ENCODE measurements at regions of chr5 and their contacts with region 1.

Region 1: GRCh38 chr5:43140286-43140685 is 19.6 kb downstream of the ZNF131 start:
- DNase-seq: peak in 1 of 35 experiments; percentile 43
- ATAC-seq: peak in 3 of 4 experiments; percentile 19 to 50 (median 49)
- H3K4me3 ChIP-seq: no peak overlapping the region
- H3K4me3 Mint-ChIP-seq: no peak overlapping the region
- H3K27ac ChIP-seq: no peak overlapping the region
- H3K27ac Mint-ChIP-seq: peak overlapping the region; percentile 19 to 65
- H3K4me1 ChIP-seq: peaks cover 8 to 9% of the 10 kb centered on the region in 2 experiments
- H3K4me1 Mint-ChIP-seq: peaks cover 49 to 63% (median 50%) of the 10 kb centered on the region in 3 donors
- H3K27me3 ChIP-seq: no peaks in the 10 kb centered on the region
- H3K27me3 Mint-ChIP-seq: no peaks in the 10 kb centered on the region

Region 2: GRCh38 chr5:43105369-43106289 is 34.7 kb before region 1 on chr5:
- CTCF ChIA-PET with region 1: interaction called, 4 to 10 read pairs
- POLR2A ChIA-PET with region 1: no interaction called
- DNase-seq: peak; percentile 75 to 97 (median 87)
- ATAC-seq: peak; percentile 92 to 97 (median 96)
- H3K4me3 ChIP-seq: peak overlapping the region; percentile 58 to 65
- H3K4me3 Mint-ChIP-seq: peak overlapping the region; percentile 76 to 82 (median 78)
- H3K27ac ChIP-seq: peak overlapping the region; percentile 62
- H3K27ac Mint-ChIP-seq: peak overlapping the region; percentile 75 to 84
- H3K4me1 ChIP-seq: peaks cover 12 to 32% of the 10 kb centered on the region in 2 experiments
- H3K4me1 Mint-ChIP-seq: peaks cover 35 to 44% (median 38%) of the 10 kb centered on the region in 3 donors
- H3K27me3 ChIP-seq: no peaks in the 10 kb centered on the region
- H3K27me3 Mint-ChIP-seq: no peaks in the 10 kb centered on the region

Region 3: GRCh38 chr5:43193181-43193893 is 53.1 kb after region 1 on chr5:
- CTCF ChIA-PET with region 1: no interaction called
- POLR2A ChIA-PET with region 1: interaction called in 1 of 2 experiments, 12 read pairs
- DNase-seq: peak in 8 of 35 experiments; percentile 4 to 63 (median 17)
- ATAC-seq: peak; percentile 50 to 84 (median 54)
- H3K4me3 ChIP-seq: peak overlapping the region; percentile 45 to 68
- H3K4me3 Mint-ChIP-seq: peak overlapping the region; percentile 79 to 87 (median 81)
- H3K27ac ChIP-seq: no peak overlapping the region
- H3K27ac Mint-ChIP-seq: no peak overlapping the region
- H3K4me1 ChIP-seq: peaks cover 0 to 21% of the 10 kb centered on the region in 2 experiments
- H3K4me1 Mint-ChIP-seq: peaks cover 17 to 28% (median 27%) of the 10 kb centered on the region in 3 donors
- H3K27me3 ChIP-seq: peaks cover 0 to 20% of the 10 kb centered on the region in 2 experiments
- H3K27me3 Mint-ChIP-seq: peaks cover 15 to 21% of the 10 kb centered on the region in 2 donors

Region 4: GRCh38 chr5:43203373-43203772 is 63.1 kb after region 1 on chr5:
- CTCF ChIA-PET with region 1: no interaction called
- POLR2A ChIA-PET with region 1: no interaction called
- DNase-seq: no peak
- ATAC-seq: no peak
- H3K4me3 ChIP-seq: no peak overlapping the region
- H3K4me3 Mint-ChIP-seq: no peak overlapping the region
- H3K27ac ChIP-seq: no peak overlapping the region
- H3K27ac Mint-ChIP-seq: no peak overlapping the region
- H3K4me1 ChIP-seq: no peaks in the 10 kb centered on the region
- H3K4me1 Mint-ChIP-seq: no peaks in the 10 kb centered on the region
- H3K27me3 ChIP-seq: peaks cover 2 to 8% of the 10 kb centered on the region in 2 experiments
- H3K27me3 Mint-ChIP-seq: peaks cover 12 to 14% of the 10 kb centered on the region in 2 donors

Measured in T-cell (primary cell).